ENCODE measurements at regions of chr17 and their contacts with region 1.

Region 1: DNA sequence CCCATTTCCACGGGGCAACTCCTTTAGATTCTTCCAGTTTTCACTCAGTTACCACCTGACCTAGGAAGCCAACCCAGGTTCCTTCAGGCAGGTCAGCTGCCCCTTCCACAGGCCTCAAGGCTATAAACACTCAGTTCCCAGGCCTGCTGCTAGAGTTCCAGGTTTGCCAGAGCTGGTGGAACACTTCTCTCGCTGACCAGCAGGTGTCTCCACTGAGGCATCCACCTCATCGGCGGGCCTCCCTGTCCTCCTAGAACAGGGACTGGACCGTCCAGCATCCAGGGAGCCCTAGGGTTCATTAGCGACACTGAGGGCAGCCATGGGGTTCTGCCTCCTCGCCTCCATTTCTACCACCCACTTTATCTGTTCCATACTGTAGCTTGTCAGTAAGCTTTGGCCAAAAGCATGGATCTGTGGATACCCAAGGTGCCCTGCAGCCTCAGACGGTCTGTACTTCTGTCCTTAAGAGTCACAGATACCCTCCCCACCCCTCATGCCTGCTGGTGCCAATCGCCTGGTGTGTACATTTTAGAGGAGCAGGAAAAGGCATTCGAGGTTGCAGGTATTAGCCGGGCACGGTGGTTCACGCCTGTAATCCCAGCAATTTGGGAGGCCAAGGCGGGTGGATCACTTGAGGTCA is 29.0 kb downstream of the PIMREG start:
- DNase-seq: peak; percentile 79
- H3K4me3 Mint-ChIP-seq: no peak overlapping the region
- H3K27ac Mint-ChIP-seq: peak overlapping the region; percentile 71
- H3K4me1 Mint-ChIP-seq: peaks cover 16% of the 10 kb centered on the region
- H3K27me3 Mint-ChIP-seq: no peaks in the 10 kb centered on the region
- CTCF ChIP-seq: peak; percentile 70

Region 2: DNA sequence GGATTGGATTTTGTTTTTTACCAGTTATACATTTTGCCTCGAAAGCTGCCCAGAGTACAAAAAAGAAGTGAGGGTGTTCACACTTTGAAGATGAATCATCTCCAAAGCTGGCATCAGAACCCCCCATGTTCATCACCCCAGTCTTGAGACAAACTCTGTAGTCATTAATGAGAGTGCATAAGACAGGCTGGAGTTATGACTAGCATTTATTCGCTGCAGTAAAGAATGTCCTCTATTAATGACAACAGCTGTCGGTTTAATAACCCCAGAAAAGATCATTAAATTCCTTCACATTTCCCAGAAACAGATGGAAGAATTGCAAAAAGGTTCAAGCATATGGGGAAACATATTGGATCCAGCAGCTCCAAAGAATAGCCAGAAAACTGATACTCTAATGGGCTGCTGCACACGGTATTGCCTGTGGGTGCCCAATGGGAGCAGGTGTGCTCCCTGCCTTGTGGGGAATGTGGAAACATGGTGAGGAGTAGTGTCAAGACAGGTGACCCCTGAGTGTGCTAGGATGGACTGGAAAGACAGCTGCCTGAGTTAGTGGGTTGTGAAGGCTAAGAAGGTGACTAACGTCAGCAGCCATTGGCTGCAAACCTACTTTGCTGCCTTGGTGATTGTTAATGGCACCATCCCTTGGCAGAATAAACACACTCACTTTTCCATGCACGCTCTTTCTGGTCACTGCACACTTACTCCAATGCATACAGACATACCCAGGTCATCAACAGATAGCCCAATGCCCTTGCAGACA is 120.3 kb before region 1 on chr17:
- CTCF ChIA-PET with region 1: no interaction called
- intact Hi-C with region 1: no loop called
- DNase-seq: no peak
- H3K4me3 Mint-ChIP-seq: no peak overlapping the region
- H3K27ac Mint-ChIP-seq: no peak overlapping the region
- H3K4me1 Mint-ChIP-seq: no peaks in the 10 kb centered on the region
- H3K27me3 Mint-ChIP-seq: peaks cover 49% of the 10 kb centered on the region
- CTCF ChIP-seq: no peak

Region 3: GRCh38 chr17:6450926-6451705 is 22.1 kb before region 1 on chr17:
- CTCF ChIA-PET with region 1: no interaction called
- intact Hi-C with region 1: no loop called
- DNase-seq: no peak
- H3K4me3 Mint-ChIP-seq: no peak overlapping the region
- H3K27ac Mint-ChIP-seq: no peak overlapping the region
- H3K4me1 Mint-ChIP-seq: peaks cover under 1% of the 10 kb centered on the region
- H3K27me3 Mint-ChIP-seq: no peaks in the 10 kb centered on the region
- CTCF ChIP-seq: no peak

Region 4: GRCh38 chr17:6496116-6496481 is 22.9 kb after region 1 on chr17:
- CTCF ChIA-PET with region 1: no interaction called
- intact Hi-C with region 1: no loop called
- DNase-seq: no peak
- H3K4me3 Mint-ChIP-seq: no peak overlapping the region
- H3K27ac Mint-ChIP-seq: no peak overlapping the region
- H3K4me1 Mint-ChIP-seq: peaks cover 19% of the 10 kb centered on the region
- H3K27me3 Mint-ChIP-seq: no peaks in the 10 kb centered on the region
- CTCF ChIP-seq: no peak

Region 5: GRCh38 chr17:6523330-6523729 is 50.1 kb after region 1 on chr17:
- CTCF ChIA-PET with region 1: no interaction called
- intact Hi-C with region 1: no loop called
- DNase-seq: peak; percentile 63
- H3K4me3 Mint-ChIP-seq: no peak overlapping the region
- H3K27ac Mint-ChIP-seq: peak overlapping the region; percentile 72
- H3K4me1 Mint-ChIP-seq: peaks cover 36% of the 10 kb centered on the region
- H3K27me3 Mint-ChIP-seq: no peaks in the 10 kb centered on the region
- CTCF ChIP-seq: no peak

Region 6: DNA sequence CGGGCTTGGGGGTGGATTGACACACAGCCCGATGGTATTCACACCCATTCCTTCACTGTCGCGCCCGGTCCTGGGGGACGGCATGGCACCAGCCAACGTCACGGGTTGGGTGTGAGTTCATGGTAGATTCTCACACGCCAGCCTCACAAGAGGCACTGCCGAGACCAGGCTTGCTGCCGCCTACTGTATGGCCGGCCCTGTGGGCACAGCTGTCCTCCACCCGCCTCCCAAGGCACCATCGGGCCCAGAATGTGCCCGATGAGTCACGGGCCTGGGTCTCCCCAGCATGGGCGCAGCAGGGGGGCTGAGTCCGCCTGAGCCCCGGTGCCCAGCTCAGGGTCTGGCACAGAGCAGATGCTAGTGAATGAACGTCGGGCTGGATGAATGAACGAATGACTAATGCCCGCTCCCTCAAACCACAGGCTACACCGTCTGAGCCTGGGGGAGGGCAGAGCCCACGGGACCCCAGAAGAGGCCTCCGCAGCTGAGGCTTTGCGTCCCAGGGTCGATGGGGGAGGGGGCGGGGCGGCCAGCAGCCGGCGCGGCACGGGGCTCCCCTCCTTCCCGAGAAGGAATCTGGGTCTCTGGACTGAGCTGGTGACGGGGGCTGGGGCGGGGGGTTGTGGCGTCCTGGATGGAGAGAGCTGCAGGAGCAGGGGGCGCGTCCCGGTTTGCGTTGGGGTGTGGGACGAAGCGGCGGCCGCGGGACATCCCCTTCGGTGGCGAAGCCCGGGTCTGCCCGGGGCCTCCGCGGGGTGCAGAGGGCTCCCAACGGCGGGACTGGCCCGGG is 82.3 kb after region 1 on chr17:
- CTCF ChIA-PET with region 1: interaction called, 3 read pairs
- intact Hi-C with region 1: loop called (anchors 5 kb)
- DNase-seq: peak; percentile 53
- H3K4me3 Mint-ChIP-seq: peak overlapping the region; percentile 78
- H3K27ac Mint-ChIP-seq: peak overlapping the region; percentile 94
- H3K4me1 Mint-ChIP-seq: peaks cover 29% of the 10 kb centered on the region
- H3K27me3 Mint-ChIP-seq: peaks cover 7% of the 10 kb centered on the region
- CTCF ChIP-seq: no peak

Region 7: GRCh38 chr17:6599364-6599763 is 126.1 kb after region 1 on chr17:
- CTCF ChIA-PET with region 1: interaction called, 6 read pairs
- intact Hi-C with region 1: loop called (anchors 10 kb)
- DNase-seq: no peak
- H3K4me3 Mint-ChIP-seq: no peak overlapping the region
- H3K27ac Mint-ChIP-seq: no peak overlapping the region
- H3K4me1 Mint-ChIP-seq: peaks cover 7% of the 10 kb centered on the region
- H3K27me3 Mint-ChIP-seq: no peaks in the 10 kb centered on the region
- CTCF ChIP-seq: no peak

Region 8: DNA sequence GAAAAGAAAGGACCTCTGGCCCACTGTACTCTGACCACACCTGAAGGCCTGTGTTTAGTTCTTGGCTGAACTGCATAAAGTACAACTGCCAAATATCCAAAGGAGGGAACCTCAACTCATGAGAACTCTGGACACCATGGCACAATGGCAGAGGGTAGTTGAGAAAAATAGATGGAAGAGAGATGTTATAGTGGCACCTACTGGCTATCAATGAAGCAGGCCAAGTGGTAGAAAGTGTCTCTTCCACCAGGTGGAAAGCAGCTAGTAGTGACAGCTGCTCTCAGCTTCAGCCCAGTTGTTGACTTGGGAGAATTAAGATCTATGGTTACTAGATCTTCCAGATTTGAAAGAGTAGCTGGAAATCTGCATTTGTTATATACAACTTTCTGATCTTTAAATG is 174.9 kb after region 1 on chr17:
- CTCF ChIA-PET with region 1: interaction called, 7 read pairs
- intact Hi-C with region 1: loop called (anchors 5 kb)
- DNase-seq: no peak
- H3K4me3 Mint-ChIP-seq: no peak overlapping the region
- H3K27ac Mint-ChIP-seq: no peak overlapping the region
- H3K4me1 Mint-ChIP-seq: peaks cover 29% of the 10 kb centered on the region
- H3K27me3 Mint-ChIP-seq: no peaks in the 10 kb centered on the region
- CTCF ChIP-seq: no peak